Gastrocnemius medialis (tissue), 4 donors: ENCODE measurements at regions of chr13 and their contacts with region 1.

Region 1: GRCh38 chr13:40777166-40777808 is 6.3 kb upstream of the MRPS31 start:
- DNase-seq: no peak
- ATAC-seq: peak; percentile 90 to 93
- H3K4me3 ChIP-seq: peak overlapping the region in 3 of 4 donors; percentile 41 to 44 (median 41)
- H3K27ac ChIP-seq: peak overlapping the region in 3 of 4 donors; percentile 7 to 48 (median 12)
- H3K4me1 ChIP-seq: peaks cover 0 to 2% of the 10 kb centered on the region in 2 donors
- H3K27me3 ChIP-seq: no peaks in the 10 kb centered on the region
- CTCF ChIP-seq: peak; percentile 64 to 77 (median 71)
- POLR2A ChIP-seq: no peak

Region 2: DNA sequence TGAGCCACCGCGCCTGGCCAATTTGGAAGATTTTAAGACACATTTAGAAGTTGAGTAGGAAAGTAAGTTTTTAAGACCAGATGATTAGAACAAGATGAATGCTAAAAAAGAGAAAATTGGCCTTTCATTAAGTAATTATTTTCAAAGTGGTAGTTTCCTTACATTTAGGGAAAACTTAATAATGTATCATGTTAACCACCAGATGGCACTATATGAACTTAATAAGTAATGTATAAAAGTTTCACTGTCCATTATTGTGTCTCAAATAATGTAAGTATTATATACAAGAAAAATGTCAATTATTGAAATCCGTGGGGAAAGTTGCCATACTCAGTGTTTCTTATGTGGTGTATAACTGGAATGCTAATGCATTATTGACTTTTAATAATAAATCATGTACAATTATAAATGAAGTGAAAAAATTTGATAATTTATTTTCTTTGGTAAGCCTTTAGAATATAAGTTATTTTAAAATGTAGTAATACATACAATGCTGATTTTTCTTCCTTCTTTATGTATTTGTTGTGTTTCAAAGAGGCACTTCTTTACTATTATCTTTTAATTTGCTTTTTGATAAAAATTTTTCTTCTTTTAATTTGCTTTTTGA is 1092.7 kb before region 1 on chr13:
- in situ Hi-C with region 1: no loop called
- intact Hi-C with region 1: loop called (anchors 1 kb)
- DNase-seq: no peak
- ATAC-seq: no peak
- H3K4me3 ChIP-seq: no peak overlapping the region
- H3K27ac ChIP-seq: no peak overlapping the region
- H3K4me1 ChIP-seq: no peaks in the 10 kb centered on the region
- H3K27me3 ChIP-seq: no peaks in the 10 kb centered on the region
- CTCF ChIP-seq: peak in 4 of 5 experiments; percentile 24 to 50 (median 38)
- POLR2A ChIP-seq: no peak